Activated T-helper 2 cell treated with anti-CD3 and anti-CD28 coated beads, Interferon-gamma antibody, Interleukin-2, Interleukin-4, amounts not matched to agents 10 μg/mL and 5 μg/mL and 100 μg/mL, durations not matched to agents 14 hours and 24 hours and 36 hours (primary cell): ENCODE measurements at regions of chr3 and their contacts with region 1.

Region 1: GRCh38 chr3:183468424-183468823 is 40.0 kb upstream of the MCF2L2 start:
- DNase-seq: no peak
- H3K4me3 Mint-ChIP-seq: no peak overlapping the region
- H3K27ac Mint-ChIP-seq: peak overlapping the region; percentile 69
- H3K4me1 Mint-ChIP-seq: peaks cover 17% of the 10 kb centered on the region
- H3K27me3 Mint-ChIP-seq: peaks cover 7% of the 10 kb centered on the region

Region 2: GRCh38 chr3:182967218-182968204 is 500.9 kb before region 1 on chr3:
- intact Hi-C with region 1: loop called (anchors 5 kb)
- DNase-seq: no peak
- H3K4me3 Mint-ChIP-seq: peak overlapping the region; percentile 46
- H3K27ac Mint-ChIP-seq: peak overlapping the region; percentile 76
- H3K4me1 Mint-ChIP-seq: peaks cover 39% of the 10 kb centered on the region
- H3K27me3 Mint-ChIP-seq: no peaks in the 10 kb centered on the region

Region 3: DNA sequence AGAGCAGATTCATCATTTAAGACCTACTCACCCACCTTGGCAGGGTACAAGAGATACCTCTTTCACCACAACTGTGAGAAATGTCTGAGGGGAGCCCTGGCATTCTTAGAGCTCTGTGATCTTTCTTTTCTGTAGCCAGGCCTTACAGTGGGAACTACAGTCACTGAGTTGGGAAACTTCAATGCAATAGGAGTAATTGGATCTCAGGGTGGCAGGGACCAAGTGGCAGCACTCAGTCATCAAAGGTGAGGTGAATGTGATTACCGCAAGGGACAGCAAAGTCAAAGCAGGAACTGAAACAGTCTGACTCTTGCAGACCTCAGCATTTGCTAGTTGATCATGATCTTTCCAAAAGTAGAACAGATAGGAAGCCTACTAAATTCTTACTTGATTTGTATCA is 32.8 kb before region 1 on chr3:
- intact Hi-C with region 1: loop called (anchors 1 kb)
- DNase-seq: no peak
- H3K4me3 Mint-ChIP-seq: no peak overlapping the region
- H3K27ac Mint-ChIP-seq: peak overlapping the region; percentile 15
- H3K4me1 Mint-ChIP-seq: peaks cover 68% of the 10 kb centered on the region
- H3K27me3 Mint-ChIP-seq: peaks cover 4% of the 10 kb centered on the region

Region 4: DNA sequence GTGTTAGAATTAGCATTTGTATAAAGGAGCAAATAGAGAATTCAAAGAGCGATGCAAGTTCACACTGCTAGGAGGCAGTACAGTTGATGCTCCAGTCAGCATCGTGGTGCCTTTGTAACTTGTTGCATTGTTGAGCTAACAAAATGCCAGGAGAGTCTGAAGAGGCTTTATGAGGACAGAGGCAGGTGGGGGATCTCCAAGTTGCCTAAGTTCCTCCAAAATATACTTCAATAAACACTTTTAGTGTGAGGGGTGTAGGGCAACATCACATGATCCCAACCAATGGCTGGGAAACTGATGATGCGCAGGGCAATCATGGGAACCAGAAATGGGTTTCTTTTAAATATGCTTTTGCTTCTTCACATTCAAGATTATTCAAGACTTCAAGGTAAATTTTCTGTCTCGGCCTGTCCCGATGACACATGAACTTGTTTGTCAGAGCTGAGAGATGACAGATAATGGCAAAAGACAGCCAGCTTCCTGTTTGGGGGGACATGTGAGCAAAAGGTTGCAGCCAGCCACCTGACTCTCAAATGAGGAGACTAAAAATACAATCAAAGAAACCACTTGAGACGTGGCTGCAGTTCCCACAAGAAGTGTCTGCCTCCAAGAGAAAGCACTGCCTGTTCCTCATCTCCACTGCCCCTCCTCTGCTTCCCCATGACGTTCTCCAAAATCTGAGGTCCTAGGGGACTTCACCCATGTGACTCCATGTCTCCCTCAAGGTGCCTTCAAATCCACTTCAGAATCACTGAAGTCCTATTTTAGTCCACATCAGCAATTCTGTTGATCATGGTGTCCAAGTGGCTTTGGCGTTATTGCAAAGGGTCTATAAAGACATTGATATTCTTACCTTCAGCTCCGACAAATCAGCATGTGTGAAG is 47.8 kb after region 1 on chr3:
- intact Hi-C with region 1: loop called (anchors 2 kb)
- DNase-seq: peak; percentile 59
- H3K4me3 Mint-ChIP-seq: no peak overlapping the region
- H3K27ac Mint-ChIP-seq: peak overlapping the region; percentile 90
- H3K4me1 Mint-ChIP-seq: peaks cover 66% of the 10 kb centered on the region
- H3K27me3 Mint-ChIP-seq: no peaks in the 10 kb centered on the region

Region 5: DNA sequence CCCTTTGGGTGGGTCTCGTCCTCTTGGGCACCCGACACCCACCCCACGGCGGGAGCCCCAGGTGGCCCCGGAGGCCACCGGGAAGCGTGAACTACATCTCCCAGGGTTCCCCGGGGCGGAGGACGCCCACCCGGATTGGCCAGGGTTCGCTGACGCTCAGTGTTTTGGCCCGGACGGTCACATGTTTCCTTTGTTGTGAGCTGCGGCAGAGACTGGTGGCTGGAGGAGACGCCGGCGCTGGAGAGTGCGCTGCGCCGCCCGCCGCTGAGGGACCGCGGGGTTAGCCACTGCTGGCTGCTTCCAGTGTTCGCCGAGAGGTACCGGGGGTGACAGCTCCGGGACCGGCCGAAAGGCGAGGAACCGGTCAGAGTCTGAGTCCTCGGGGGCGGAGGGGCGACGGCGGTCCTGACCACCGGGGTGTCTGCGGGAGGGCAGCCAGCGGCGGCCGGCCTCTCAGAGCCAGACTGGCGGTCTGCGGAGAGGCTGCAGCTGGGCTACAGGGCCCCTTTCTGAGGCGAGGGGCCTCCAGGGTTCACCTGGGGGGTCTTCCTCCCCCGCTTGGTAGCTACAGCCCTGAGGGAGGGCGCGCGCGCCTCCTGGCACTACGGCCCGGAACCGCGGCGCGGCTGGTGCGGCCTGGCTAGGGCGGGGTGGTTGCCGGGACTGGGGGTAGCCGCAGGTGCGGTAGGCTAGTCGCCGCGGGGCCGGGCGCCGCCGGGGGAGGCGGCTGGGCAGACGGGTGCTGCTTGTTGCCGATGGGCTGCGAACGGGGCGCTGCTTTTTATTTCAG is 167.2 kb after region 1 on chr3 and contains the start of gene KLHL24:
- intact Hi-C with region 1: loop called (anchors 1 kb)
- DNase-seq: peak; percentile 87
- H3K4me3 Mint-ChIP-seq: peak within 1 kb of the TSS; percentile 91
- H3K27ac Mint-ChIP-seq: peak within 1 kb of the TSS; percentile 93
- H3K4me1 Mint-ChIP-seq: peaks cover 24% of the 10 kb centered on the region
- H3K27me3 Mint-ChIP-seq: no peaks in the 10 kb centered on the region
- total RNA-seq, gene KLHL24: 8.7 and 10.5 TPM in 2 replicates

Region 6: GRCh38 chr3:183766745-183767606 is 298.6 kb after region 1 on chr3:
- intact Hi-C with region 1: loop called (anchors 1 kb)
- DNase-seq: peak; percentile 63
- H3K4me3 Mint-ChIP-seq: no peak overlapping the region
- H3K27ac Mint-ChIP-seq: peak overlapping the region; percentile 7
- H3K4me1 Mint-ChIP-seq: peaks cover 6% of the 10 kb centered on the region
- H3K27me3 Mint-ChIP-seq: no peaks in the 10 kb centered on the region

Region 7: GRCh38 chr3:184017672-184018423 is 549.4 kb after region 1 on chr3 and contains the start of gene ABCC5:
- intact Hi-C with region 1: loop called (anchors 5 kb)
- DNase-seq: peak; percentile 78
- H3K4me3 Mint-ChIP-seq: peak within 1 kb of the TSS; percentile 97
- H3K27ac Mint-ChIP-seq: peak within 1 kb of the TSS; percentile 86
- H3K4me1 Mint-ChIP-seq: peaks cover 23% of the 10 kb centered on the region
- H3K27me3 Mint-ChIP-seq: peaks cover 10% of the 10 kb centered on the region
- total RNA-seq, gene ABCC5: 20.6 and 21.0 TPM in 2 replicates